ENCODE measurements at regions of chr12 and their contacts with region 1.

Region 1: DNA sequence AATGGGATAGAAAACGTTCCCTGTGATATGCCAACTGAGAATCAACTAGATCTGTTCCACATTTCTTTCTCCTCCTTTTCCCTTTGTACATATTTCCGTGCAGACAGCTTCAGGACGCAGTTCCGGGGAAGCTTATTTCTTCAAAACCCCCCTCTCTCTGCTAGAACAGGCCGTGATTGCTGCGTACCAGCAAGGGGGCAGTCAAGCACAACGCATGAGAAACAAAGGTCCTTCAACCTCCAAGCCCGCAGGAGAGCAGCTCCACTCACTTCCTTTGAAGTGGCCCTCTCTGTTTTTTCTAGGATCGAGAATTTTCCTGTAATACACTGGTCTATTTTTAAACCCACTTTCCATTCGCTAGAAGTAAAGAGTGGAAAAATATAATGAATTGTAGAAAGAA is 80.8 kb downstream of the ZNF664 start:
- DNase-seq: peak; percentile 92
- H3K4me3 ChIP-seq: no peak overlapping the region
- H3K27ac ChIP-seq: peak overlapping the region; percentile 46
- H3K4me1 ChIP-seq: peaks cover 8% of the 10 kb centered on the region
- H3K27me3 ChIP-seq: no peaks in the 10 kb centered on the region
- CTCF ChIP-seq: peak; percentile 82 to 92
- POLR2A ChIP-seq: no peak

Region 2: DNA sequence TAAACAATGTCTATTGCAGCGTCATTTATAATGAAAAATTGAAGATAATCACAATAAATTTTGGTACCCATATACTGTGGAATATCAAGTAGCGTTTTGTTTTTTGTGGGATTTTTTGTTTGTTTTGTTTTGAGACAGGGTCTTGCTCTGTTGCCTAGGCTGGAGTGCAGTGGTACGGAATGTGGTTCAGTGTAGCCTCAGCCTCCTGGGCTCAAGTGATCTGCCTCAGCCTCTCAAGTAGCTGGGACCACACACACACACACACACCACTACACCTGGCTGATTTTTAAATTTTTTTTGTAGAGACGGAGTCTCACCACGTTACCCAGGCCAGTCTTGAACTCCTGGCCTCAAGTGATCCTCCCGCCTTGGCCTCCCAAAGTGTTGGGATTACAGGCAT is 74.3 kb before region 1 on chr12:
- CTCF ChIA-PET with region 1: no interaction called
- POLR2A ChIA-PET with region 1: no interaction called
- dilution Hi-C with region 1: no loop called
- intact Hi-C with region 1: no loop called
- DNase-seq: no peak
- H3K4me3 ChIP-seq: no peak overlapping the region
- H3K27ac ChIP-seq: no peak overlapping the region
- H3K4me1 ChIP-seq: no peaks in the 10 kb centered on the region
- H3K27me3 ChIP-seq: no peaks in the 10 kb centered on the region
- CTCF ChIP-seq: no peak
- POLR2A ChIP-seq: no peak

Region 3: DNA sequence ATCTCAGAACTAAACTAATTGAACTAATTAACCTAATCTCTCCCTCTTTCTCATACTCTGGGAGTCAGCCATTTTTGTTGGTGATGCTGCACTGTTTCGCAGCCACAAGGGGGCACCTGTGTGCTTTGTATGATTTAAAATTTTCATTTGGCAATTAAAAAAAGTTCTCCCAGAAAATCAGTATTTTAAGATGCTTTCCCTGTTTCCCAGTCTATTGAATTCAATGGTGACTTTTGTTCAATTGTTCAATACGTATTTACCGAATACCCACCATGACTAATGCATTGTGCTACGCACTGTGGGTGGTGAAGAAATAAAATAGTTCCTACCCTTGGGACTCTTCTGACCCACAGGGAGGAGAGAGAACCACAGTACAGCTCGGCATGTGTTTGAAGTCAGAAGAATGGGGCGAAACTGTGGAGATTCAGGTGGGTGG is 17.2 kb before region 1 on chr12:
- CTCF ChIA-PET with region 1: interaction called, 85 read pairs
- POLR2A ChIA-PET with region 1: no interaction called
- dilution Hi-C with region 1: no loop called
- intact Hi-C with region 1: no loop called
- DNase-seq: peak; percentile 60
- H3K4me3 ChIP-seq: no peak overlapping the region
- H3K27ac ChIP-seq: no peak overlapping the region
- H3K4me1 ChIP-seq: peaks cover 6% of the 10 kb centered on the region
- H3K27me3 ChIP-seq: peaks cover 0 to 3% of the 10 kb centered on the region in 2 experiments
- CTCF ChIP-seq: peak; percentile 75 to 81
- POLR2A ChIP-seq: no peak

Region 4: GRCh38 chr12:124240493-124240892 is 186.6 kb after region 1 on chr12:
- CTCF ChIA-PET with region 1: interaction called, 16 read pairs
- POLR2A ChIA-PET with region 1: no interaction called
- dilution Hi-C with region 1: no loop called
- intact Hi-C with region 1: no loop called
- DNase-seq: peak; percentile 9
- H3K4me3 ChIP-seq: no peak overlapping the region
- H3K27ac ChIP-seq: no peak overlapping the region
- H3K4me1 ChIP-seq: peaks cover 20% of the 10 kb centered on the region
- H3K27me3 ChIP-seq: no peaks in the 10 kb centered on the region
- CTCF ChIP-seq: no peak
- POLR2A ChIP-seq: no peak

Region 5: DNA sequence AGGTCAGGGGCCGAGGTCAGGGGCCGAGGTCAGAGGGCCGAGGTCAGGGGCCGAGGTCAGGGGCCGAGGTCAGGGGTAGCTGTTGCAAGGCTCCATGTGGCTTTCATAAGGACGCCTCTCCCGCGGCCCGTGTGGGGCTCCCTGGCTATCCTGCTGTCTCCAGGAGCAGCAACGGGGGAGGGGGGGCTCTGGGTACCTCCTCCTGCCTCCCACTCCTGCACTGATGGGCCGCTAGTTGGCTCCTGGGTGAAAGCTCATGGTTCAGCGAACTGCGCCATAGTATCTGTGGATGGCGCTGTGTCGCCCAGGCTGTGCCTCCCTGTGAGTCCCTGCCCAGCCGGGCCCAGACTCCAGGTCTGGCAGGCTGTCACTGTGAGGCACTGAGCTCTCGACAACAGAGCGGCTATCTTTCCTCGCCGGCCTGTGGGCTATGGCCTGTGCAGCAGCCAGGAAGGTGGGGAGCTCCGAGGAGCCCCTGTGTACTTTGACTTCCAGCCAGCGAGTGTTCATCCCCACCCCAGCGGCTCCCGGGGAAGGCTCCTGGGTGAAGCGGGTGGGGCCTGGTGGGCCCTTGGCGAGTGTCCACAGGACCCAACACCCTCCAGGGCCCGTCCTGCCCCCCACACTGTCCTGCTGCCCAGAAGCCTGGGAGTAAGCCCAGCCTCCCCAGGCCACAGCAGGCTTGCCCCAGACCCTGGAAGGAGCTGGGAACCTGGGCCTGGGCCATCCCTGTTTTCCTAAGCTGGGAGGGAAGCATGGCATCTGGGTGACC is 249.1 kb after region 1 on chr12:
- CTCF ChIA-PET with region 1: interaction called, 28 read pairs
- POLR2A ChIA-PET with region 1: no interaction called
- dilution Hi-C with region 1: no loop called
- intact Hi-C with region 1: loop called (anchors 5 kb)
- DNase-seq: no peak
- H3K4me3 ChIP-seq: no peak overlapping the region
- H3K27ac ChIP-seq: no peak overlapping the region
- H3K4me1 ChIP-seq: no peaks in the 10 kb centered on the region
- H3K27me3 ChIP-seq: no peaks in the 10 kb centered on the region
- CTCF ChIP-seq: no peak
- POLR2A ChIP-seq: no peak

Region 6: GRCh38 chr12:124321040-124321481 is 267.2 kb after region 1 on chr12:
- CTCF ChIA-PET with region 1: interaction called, 169 read pairs
- POLR2A ChIA-PET with region 1: interaction called, 3 read pairs
- dilution Hi-C with region 1: no loop called
- intact Hi-C with region 1: loop called (anchors 1 kb)
- DNase-seq: peak; percentile 59
- H3K4me3 ChIP-seq: no peak overlapping the region
- H3K27ac ChIP-seq: no peak overlapping the region
- H3K4me1 ChIP-seq: no peaks in the 10 kb centered on the region
- H3K27me3 ChIP-seq: no peaks in the 10 kb centered on the region
- CTCF ChIP-seq: peak; percentile 94 to 98
- POLR2A ChIP-seq: peak; percentile 36